ENCODE measurements at regions of chr12 and their contacts with region 1.

Region 1: DNA sequence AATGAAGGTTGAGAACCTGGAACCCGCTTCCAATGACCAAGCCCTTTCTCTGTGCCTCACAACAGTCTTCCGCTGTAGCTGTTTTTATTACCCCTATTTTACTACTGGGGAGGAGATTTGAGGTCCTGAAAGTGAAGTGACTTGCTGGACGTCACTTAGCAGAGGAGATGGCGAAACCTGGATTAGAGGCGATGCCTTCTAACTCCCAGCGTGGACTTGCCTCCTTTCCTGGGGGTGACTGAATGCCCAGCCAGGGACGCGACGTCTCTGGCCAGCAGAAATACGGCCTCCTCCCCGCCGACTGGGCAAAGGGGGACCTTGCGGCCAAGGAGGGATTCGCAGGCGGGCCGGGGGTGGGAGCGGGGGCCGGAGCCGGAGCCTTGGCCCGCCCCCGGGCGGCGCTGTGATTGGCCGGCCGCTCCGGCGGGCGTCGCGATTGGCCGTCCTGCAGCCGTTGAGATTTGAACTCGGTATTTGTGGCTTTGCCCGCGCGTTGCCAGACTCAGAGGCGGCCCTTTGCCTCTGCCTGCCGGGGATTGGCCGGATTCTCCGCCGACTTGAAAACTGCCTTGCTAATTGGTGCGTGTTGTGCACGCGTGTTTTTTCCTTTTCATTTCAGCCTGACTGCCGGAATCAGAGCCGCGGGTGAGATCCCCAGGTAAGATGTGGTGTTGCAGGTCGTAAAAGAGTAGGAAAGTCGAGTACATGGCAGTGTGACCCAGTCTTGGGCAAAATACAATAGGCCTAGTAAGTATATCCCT is at the start of gene NCAPD2:
- DNase-seq: peak; percentile 89 to 97 (median 95)
- ATAC-seq: peak; percentile 83 to 87
- H3K4me3 Mint-ChIP-seq: peak within 1 kb of the TSS; percentile 91 to 99 (median 98)
- H3K27ac Mint-ChIP-seq: peak within 1 kb of the TSS; percentile 94 to 100 (median 97)
- H3K4me1 Mint-ChIP-seq: peaks cover 15 to 50% (median 37%) of the 10 kb centered on the region in 4 donors
- H3K27me3 Mint-ChIP-seq: no peaks in the 10 kb centered on the region
- polyA plus RNA-seq, gene NCAPD2: 24.7 to 45.3 (median 28.1) TPM

Region 2: DNA sequence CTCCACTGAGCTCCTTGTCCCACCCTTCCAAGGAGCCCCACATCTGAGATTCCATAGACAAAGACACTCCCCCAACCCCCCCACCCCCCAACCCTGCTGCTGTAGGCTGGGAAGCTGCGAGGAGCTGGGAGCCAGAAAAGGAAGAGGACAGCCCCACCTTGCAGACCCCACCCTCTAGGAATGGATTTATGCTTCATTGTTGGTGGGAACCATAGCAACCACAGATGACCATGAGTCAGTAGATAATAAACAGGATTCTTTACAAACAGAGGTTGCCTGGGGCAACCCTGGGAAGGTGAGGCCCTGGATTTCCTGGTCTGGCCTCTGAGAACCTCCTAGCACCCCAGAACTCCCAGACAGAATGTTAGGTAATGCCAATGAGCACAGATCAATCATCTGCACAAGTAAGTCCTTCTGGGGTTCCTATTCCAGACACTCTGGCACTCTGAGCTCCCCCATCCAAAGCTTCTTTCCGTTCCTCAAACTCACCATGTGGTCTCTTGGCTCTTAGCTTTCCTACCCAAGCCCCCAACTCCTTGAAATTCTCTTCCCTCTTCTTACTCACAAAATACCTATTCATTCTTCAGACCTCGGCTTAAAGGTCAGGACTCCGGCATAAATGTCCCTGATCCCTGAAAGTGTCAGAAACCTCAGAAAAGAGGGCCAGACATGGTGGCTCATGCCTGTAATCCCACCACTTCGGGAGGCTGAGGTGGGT is 198.4 kb before region 1 on chr12:
- POLR2A ChIA-PET with region 1: no interaction called
- DNase-seq: no peak
- ATAC-seq: no peak
- H3K4me3 Mint-ChIP-seq: no peak overlapping the region
- H3K27ac Mint-ChIP-seq: peak overlapping the region in 1 of 10 donors; percentile 30
- H3K4me1 Mint-ChIP-seq: peaks cover 0 to 4% (median 0%) of the 10 kb centered on the region in 4 donors
- H3K27me3 Mint-ChIP-seq: peaks cover 0 to 12% (median 0%) of the 10 kb centered on the region in 5 donors

Region 3: GRCh38 chr12:6443361-6443983 is 50.2 kb before region 1 on chr12:
- POLR2A ChIA-PET with region 1: interaction called, 19 read pairs
- DNase-seq: no peak
- ATAC-seq: peak in 1 of 2 donors; percentile 27
- H3K4me3 Mint-ChIP-seq: peak overlapping the region; percentile 84 to 100 (median 99)
- H3K27ac Mint-ChIP-seq: peak overlapping the region; percentile 87 to 99 (median 96)
- H3K4me1 Mint-ChIP-seq: peaks cover 40 to 70% (median 60%) of the 10 kb centered on the region in 4 donors
- H3K27me3 Mint-ChIP-seq: no peaks in the 10 kb centered on the region

Region 4: GRCh38 chr12:6451348-6452244 is 42.1 kb before region 1 on chr12 and contains the start of gene TAPBPL:
- POLR2A ChIA-PET with region 1: interaction called, 10 read pairs
- DNase-seq: peak; percentile 65 to 90 (median 83)
- ATAC-seq: peak; percentile 86 to 95
- H3K4me3 Mint-ChIP-seq: peak within 1 kb of the TSS; percentile 95 to 100 (median 98)
- H3K27ac Mint-ChIP-seq: peak within 1 kb of the TSS; percentile 95 to 100 (median 100)
- H3K4me1 Mint-ChIP-seq: peaks cover 46 to 79% (median 75%) of the 10 kb centered on the region in 4 donors
- H3K27me3 Mint-ChIP-seq: no peaks in the 10 kb centered on the region
- polyA plus RNA-seq, gene TAPBPL: 46.0 to 126 (median 106) TPM

Region 5: GRCh38 chr12:6461401-6462233 is 32.1 kb before region 1 on chr12:
- POLR2A ChIA-PET with region 1: interaction called, 12 read pairs
- DNase-seq: peak; percentile 59 to 93 (median 83)
- ATAC-seq: peak; percentile 79 to 93
- H3K4me3 Mint-ChIP-seq: peak overlapping the region; percentile 67 to 89 (median 81)
- H3K27ac Mint-ChIP-seq: peak overlapping the region; percentile 94 to 100 (median 98)
- H3K4me1 Mint-ChIP-seq: peaks cover 63 to 94% (median 91%) of the 10 kb centered on the region in 4 donors
- H3K27me3 Mint-ChIP-seq: no peaks in the 10 kb centered on the region

Region 6: GRCh38 chr12:6520186-6520585 is 26.5 kb after region 1 on chr12:
- POLR2A ChIA-PET with region 1: no interaction called
- DNase-seq: no peak
- ATAC-seq: no peak
- H3K4me3 Mint-ChIP-seq: no peak overlapping the region
- H3K27ac Mint-ChIP-seq: peak overlapping the region in 2 of 10 donors; percentile 53 to 60
- H3K4me1 Mint-ChIP-seq: peaks cover 0 to 3% (median 0%) of the 10 kb centered on the region in 4 donors
- H3K27me3 Mint-ChIP-seq: no peaks in the 10 kb centered on the region

Region 7: GRCh38 chr12:6533923-6534694 is 40.4 kb after region 1 on chr12 and contains the start of gene GAPDH:
- POLR2A ChIA-PET with region 1: interaction called, 18 read pairs
- DNase-seq: peak in 8 of 10 donors; percentile 69 to 91 (median 82)
- ATAC-seq: peak; percentile 58 to 68
- H3K4me3 Mint-ChIP-seq: peak within 1 kb of the TSS; percentile 87 to 97 (median 92)
- H3K27ac Mint-ChIP-seq: peak within 1 kb of the TSS; percentile 94 to 99 (median 98)
- H3K4me1 Mint-ChIP-seq: peaks cover 18 to 51% (median 50%) of the 10 kb centered on the region in 4 donors
- H3K27me3 Mint-ChIP-seq: no peaks in the 10 kb centered on the region
- polyA plus RNA-seq, gene GAPDH: 1,014 to 1,110 (median 1,062) TPM

Region 8: GRCh38 chr12:6723607-6724396 is 230.1 kb after region 1 on chr12 and contains the start of gene COPS7A:
- POLR2A ChIA-PET with region 1: interaction called, 10 read pairs
- DNase-seq: peak; percentile 73 to 98 (median 92)
- ATAC-seq: peak; percentile 85 to 90
- H3K4me3 Mint-ChIP-seq: peak within 1 kb of the TSS; percentile 74 to 99 (median 93)
- H3K27ac Mint-ChIP-seq: peak within 1 kb of the TSS; percentile 92 to 98 (median 96)
- H3K4me1 Mint-ChIP-seq: peaks cover 19 to 32% (median 24%) of the 10 kb centered on the region in 4 donors
- H3K27me3 Mint-ChIP-seq: no peaks in the 10 kb centered on the region
- polyA plus RNA-seq, gene COPS7A: 34.9 to 42.4 (median 36.2) TPM

Measured in naive thymus-derived CD8-positive, alpha-beta T cell (primary cell).